Lower leg skin (tissue), 4 donors: ENCODE measurements at regions of chr15 and their contacts with region 1.

Region 1: DNA sequence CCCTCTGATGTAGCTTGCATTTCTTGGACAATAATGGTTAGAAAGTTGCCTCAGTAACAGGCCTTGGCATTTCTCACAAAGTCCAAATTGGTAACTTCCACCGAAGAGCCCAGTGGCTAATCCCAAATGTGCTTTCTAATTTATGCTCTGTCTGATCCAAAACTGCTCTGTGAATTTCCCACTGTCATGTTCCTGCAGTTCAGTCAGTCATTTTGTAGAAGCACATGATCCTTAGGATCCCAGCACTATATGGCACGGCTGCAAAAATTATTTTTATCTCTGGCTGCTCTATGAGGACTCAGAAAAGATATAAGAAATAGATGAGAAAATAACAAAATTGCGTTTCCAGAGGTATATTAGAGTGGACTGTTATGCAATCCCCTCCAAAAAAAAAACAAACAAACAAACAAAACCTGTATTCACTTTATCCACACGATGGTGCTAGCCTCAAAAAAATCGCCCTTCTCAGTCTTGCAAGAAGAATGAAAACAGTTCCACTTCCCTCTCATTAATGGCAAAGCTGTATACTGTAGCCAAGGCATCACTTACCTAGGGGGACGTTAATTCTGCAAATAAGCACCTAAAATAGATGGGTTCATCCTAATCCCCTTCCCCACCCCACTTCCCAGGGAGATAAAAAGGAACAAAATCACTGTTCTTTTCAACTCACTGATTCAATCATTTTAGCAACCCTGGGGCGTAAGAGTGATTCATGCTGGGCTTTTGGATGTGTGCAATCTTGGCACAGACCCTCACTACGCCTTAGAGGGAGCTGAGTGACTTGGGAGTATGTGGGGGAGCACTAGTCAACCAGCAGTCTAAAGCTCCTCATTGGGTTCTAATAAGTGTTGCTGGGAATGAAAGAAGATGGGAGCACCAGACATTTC is 61.3 kb downstream of the TMCO5A start:
- DNase-seq: no peak
- H3K4me3 ChIP-seq: no peak overlapping the region
- CTCF ChIP-seq: no peak
- POLR2A ChIP-seq: no peak

Region 2: DNA sequence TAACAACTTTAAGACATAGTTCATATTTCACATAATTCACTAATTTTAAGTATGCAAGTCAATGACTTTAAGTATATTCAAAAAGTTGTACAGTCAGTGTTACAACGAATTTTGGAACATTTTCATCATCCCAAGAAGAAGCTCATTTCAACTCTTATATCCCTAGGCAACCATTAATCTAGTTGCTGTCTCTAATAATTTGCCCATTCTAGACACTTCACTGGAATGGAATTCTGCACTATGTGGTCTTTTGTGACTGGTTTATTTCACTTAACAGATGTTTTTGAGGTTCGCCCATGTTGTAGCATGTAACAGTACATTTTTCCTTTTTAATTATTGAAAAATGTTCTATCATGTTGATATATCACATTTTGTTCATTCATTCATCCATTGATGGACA is 152.8 kb after region 1 on chr15:
- intact Hi-C with region 1: no loop called
- DNase-seq: no peak
- H3K4me3 ChIP-seq: no peak overlapping the region
- CTCF ChIP-seq: no peak
- POLR2A ChIP-seq: no peak

Region 3: GRCh38 chr15:38389924-38390542 is 394.3 kb after region 1 on chr15:
- intact Hi-C with region 1: loop called (anchors 5 kb)
- DNase-seq: peak; percentile 63 to 88
- H3K4me3 ChIP-seq: no peak overlapping the region
- CTCF ChIP-seq: no peak
- POLR2A ChIP-seq: no peak